Activated CD4-positive, alpha-beta T cell treated with anti-CD3 and anti-CD28 coated beads, Interleukin-2, amount 10 ng/mL, durations not matched to agents 24 days and 14 days (primary cell): ENCODE measurements at regions of chr12 and their contacts with region 1.

Region 1: DNA sequence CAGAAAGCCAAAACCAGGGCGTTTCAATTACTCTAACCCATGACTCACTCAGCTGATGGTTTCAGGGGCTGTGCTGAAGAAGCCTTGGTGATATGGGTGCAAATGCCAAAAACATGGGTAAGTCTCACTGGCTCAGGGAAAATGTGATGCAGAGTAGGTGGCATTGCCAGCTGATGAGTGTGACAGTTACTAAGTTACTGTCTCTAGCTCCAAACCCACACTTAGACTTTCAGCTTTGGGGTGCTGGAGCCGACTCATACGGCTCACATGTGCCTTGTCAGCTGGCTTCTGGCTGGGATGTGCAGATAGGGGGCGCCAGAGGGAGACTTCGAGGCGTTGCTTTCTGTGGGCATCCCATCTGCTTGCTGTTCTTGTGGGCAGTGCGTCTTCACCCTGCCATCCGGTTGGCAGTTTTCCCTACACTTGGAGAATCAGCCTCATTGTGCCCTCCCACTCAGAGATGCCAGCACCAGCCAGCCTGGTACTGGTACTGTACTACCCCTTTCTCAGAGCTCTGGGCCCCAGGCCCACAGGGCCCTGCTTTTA is 11.1 kb upstream of the KRT7 start:
- DNase-seq: peak; percentile 92
- H3K4me3 Mint-ChIP-seq: no peak overlapping the region
- H3K27ac Mint-ChIP-seq: no peak overlapping the region
- H3K4me1 Mint-ChIP-seq: peaks cover 12% of the 10 kb centered on the region
- H3K27me3 Mint-ChIP-seq: peaks cover 45% of the 10 kb centered on the region

Region 2: DNA sequence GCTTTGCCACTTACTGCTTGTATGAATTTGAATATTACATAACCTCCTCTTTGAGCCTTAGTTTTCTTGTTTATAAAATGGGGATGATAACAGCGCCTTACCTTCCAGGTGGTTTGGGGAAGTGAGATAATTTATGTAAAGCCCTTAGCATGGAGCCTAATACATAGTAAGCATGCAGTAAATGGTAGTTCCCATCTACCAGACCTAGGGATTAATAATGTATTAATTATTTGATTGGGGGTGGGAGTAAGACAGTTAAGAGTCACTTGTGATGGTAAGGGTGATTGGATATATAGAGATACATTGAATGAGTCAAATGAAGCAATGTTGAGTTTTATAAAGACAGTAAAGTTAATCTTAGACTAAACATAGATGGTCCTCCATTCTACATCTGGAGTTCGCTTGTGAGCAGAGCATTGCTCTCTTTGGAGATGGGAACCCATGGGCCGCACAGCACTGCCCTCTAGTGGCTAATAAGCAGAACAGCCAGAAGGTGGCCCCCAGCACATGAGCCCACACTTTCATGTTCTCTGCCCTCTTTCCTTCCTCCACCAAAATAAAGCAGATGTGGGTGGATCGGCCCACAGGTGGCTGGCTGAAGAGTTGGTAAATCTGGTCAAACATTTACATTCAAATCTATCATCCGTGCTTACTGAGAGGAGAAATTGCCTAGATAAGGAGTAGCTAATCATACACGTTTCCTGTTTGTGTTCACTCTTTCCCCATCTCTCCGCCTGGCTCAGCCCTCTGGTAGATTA is 241.8 kb before region 1 on chr12:
- intact Hi-C with region 1: no loop called
- DNase-seq: peak; percentile 89
- H3K4me3 Mint-ChIP-seq: no peak overlapping the region
- H3K27ac Mint-ChIP-seq: no peak overlapping the region
- H3K4me1 Mint-ChIP-seq: peaks cover 30% of the 10 kb centered on the region
- H3K27me3 Mint-ChIP-seq: peaks cover 3% of the 10 kb centered on the region

Region 3: DNA sequence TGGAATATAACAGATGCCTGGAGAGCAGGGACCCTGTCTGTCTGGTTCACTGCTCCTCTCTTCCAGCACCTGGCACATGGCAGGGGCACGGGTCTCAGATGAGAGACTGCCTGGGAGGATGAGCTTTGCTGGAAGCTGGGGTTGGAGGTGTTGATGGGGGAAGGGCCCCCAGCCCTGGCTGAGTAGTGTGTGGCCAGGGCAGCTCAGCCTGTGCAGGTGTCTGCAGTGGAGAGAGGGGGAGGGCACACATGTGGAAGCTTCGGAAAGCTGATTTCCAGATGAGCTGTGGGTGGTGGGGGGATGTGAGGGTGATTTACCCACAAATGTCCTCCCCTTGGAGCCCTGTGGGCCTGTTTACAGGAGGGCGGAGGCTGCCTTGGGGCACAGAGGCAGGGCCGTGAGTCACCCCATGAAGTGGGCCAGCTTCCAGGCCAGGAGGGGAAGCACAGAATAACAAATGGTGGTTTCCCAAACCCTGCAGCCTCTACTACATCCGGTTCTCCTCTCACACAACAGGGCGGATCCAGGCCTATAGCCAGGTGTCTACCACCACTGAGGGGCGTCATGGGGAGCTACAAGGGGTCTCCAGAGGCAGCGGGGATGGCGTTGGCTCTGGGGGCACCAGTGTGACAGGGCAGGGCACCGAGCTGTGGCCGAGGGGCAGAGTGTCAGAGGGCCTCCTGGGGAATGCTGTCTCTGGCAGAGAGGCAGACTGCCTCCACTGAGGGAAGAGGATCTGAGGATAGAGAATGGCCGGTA is 22.1 kb after region 1 on chr12:
- intact Hi-C with region 1: loop called (anchors 1 kb)
- DNase-seq: peak; percentile 92
- H3K4me3 Mint-ChIP-seq: peak overlapping the region; percentile 91
- H3K27ac Mint-ChIP-seq: peak overlapping the region; percentile 99
- H3K4me1 Mint-ChIP-seq: peaks cover 63% of the 10 kb centered on the region
- H3K27me3 Mint-ChIP-seq: peaks cover 1% of the 10 kb centered on the region

Region 4: DNA sequence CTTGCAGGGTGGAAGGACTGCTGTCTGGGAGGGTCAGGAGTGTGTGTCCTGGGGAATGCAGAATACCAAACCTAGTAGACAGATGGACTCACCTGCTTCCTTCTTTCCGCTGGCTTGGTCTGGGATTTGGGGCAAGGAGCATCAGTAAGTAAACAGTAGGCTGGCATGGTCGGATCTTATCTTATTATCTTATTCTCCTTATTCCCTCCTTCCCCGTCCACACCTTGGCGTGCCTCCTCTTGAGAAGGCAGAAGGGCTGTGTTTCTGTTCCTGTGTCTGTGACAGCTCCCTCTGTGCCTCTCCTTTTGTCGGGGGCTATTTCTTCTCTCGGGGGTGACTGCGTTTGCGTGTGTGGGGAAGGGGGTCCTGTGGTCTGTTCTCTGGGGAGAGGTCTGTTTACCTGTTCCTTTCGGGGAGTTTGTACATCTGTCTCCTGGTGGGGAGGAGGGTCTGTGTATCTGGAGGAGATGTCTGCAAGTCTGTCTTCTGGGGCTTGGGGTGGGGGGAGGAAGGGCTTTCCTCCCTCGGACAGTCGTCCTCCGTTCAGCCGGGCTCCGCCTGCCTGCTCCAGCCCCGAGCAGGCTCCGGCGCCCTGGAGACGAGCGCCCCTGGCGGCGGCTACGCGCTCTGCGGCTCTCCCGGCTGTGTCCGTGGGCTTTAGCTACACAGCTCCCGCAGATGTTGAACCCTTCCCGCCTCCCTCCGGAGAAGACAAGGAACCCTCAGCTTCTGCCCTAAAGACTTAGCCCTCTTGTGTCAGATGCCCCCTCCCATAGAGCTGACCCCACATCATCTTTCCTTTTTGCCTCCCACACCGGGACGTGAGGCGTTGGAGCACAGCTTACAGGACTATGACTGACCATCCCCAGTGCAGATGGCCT is 56.8 kb after region 1 on chr12:
- intact Hi-C with region 1: loop called (anchors 2 kb)
- DNase-seq: peak; percentile 95
- H3K4me3 Mint-ChIP-seq: peak overlapping the region; percentile 33
- H3K27ac Mint-ChIP-seq: no peak overlapping the region
- H3K4me1 Mint-ChIP-seq: peaks cover 10% of the 10 kb centered on the region
- H3K27me3 Mint-ChIP-seq: peaks cover 31% of the 10 kb centered on the region

Region 5: GRCh38 chr12:52865090-52865944 is 643.3 kb after region 1 on chr12:
- intact Hi-C with region 1: no loop called
- DNase-seq: peak; percentile 72
- H3K4me3 Mint-ChIP-seq: no peak overlapping the region
- H3K27ac Mint-ChIP-seq: no peak overlapping the region
- H3K4me1 Mint-ChIP-seq: peaks cover 9% of the 10 kb centered on the region
- H3K27me3 Mint-ChIP-seq: no peaks in the 10 kb centered on the region

Region 6: DNA sequence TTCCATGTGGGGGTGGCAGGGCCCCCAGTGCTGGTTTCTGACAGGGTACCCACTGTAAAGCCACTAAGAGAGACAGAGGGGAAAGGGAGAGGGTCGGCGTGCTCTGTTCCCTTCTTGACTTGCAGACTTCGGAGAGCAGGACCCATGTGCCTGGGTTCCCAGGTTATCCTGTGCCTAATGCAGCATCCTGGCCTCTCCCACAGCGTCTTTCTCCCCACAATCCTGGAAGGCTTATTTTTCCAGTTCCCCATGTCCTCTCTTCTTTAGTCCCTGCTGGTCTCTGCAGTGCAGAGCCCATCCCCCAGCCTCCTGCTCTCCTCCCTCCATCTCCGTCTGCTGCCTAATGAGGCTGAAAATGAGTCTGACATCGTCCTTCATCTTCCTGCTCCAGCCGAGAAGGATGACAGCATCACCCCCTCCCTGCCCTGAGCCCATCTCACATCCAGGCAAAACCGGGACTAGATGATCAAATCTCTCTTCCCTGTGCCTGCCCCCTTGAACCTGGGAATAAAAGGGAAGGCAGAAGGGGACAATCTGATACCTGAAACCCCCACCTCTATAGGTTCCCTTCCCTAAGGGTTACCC is 1490.2 kb after region 1 on chr12:
- intact Hi-C with region 1: no loop called
- DNase-seq: no peak
- H3K4me3 Mint-ChIP-seq: no peak overlapping the region
- H3K27ac Mint-ChIP-seq: no peak overlapping the region
- H3K4me1 Mint-ChIP-seq: no peaks in the 10 kb centered on the region
- H3K27me3 Mint-ChIP-seq: peaks cover 14% of the 10 kb centered on the region